ENCODE measurements at regions of chr5 and their contacts with region 1.

Region 1: GRCh38 chr5:88251048-88251711 is 17.5 kb downstream of the TMEM161B start:
- DNase-seq: no peak
- H3K4me3 Mint-ChIP-seq: peak overlapping the region; percentile 57
- H3K27ac Mint-ChIP-seq: peak overlapping the region; percentile 72
- H3K4me1 Mint-ChIP-seq: peaks cover 54% of the 10 kb centered on the region
- H3K27me3 Mint-ChIP-seq: no peaks in the 10 kb centered on the region

Region 2: GRCh38 chr5:88203981-88204750 is 47.0 kb before region 1 on chr5:
- intact Hi-C with region 1: loop called (anchors 1 kb)
- DNase-seq: peak; percentile 5
- H3K4me3 Mint-ChIP-seq: peak overlapping the region; percentile 24
- H3K27ac Mint-ChIP-seq: peak overlapping the region; percentile 72
- H3K4me1 Mint-ChIP-seq: peaks cover 14% of the 10 kb centered on the region
- H3K27me3 Mint-ChIP-seq: no peaks in the 10 kb centered on the region

Region 3: GRCh38 chr5:88756953-88757352 is 505.8 kb after region 1 on chr5:
- intact Hi-C with region 1: no loop called
- DNase-seq: no peak
- H3K4me3 Mint-ChIP-seq: no peak overlapping the region
- H3K27ac Mint-ChIP-seq: no peak overlapping the region
- H3K4me1 Mint-ChIP-seq: no peaks in the 10 kb centered on the region
- H3K27me3 Mint-ChIP-seq: peaks cover 12% of the 10 kb centered on the region